ENCODE measurements at regions of chr22 and their contacts with region 1.

Region 1: DNA sequence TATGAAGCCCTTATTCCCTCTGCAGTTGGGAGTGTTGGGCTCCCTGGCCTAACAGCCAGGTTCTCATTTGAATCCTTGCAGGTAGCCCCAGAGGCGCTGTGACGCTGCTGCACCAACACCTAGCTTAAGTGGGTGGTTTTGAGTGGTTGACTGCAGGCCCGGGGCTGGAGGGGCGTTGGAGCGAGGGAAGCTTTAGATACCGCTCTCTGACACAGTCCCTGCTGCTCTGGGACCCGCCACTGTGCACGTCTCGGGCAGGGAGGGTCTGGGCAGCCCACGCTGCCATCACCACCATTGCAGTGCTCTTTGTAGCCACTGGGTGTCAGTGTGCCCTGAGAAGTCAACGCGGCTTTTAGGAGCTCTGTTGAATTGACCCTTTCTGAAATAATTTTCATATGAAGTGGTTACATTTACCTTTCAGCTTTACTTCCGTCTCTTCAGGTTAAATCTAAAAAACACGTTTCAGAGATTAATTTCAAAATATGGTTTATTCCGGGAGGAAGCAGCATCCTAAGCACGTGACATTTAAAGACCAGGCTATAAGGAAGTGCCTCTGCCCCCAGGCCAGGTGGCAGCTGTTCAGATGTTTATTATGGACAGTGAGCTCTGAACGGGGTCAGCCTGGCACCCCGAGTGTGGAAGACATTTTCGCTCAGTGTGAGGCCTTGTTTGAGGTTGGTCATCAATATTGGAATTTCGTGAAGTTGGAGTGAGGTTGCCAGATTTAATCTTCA is 30.9 kb upstream of the PARVB start:
- DNase-seq: peak in 6 of 10 donors; percentile 42 to 91 (median 60)

Region 2: DNA sequence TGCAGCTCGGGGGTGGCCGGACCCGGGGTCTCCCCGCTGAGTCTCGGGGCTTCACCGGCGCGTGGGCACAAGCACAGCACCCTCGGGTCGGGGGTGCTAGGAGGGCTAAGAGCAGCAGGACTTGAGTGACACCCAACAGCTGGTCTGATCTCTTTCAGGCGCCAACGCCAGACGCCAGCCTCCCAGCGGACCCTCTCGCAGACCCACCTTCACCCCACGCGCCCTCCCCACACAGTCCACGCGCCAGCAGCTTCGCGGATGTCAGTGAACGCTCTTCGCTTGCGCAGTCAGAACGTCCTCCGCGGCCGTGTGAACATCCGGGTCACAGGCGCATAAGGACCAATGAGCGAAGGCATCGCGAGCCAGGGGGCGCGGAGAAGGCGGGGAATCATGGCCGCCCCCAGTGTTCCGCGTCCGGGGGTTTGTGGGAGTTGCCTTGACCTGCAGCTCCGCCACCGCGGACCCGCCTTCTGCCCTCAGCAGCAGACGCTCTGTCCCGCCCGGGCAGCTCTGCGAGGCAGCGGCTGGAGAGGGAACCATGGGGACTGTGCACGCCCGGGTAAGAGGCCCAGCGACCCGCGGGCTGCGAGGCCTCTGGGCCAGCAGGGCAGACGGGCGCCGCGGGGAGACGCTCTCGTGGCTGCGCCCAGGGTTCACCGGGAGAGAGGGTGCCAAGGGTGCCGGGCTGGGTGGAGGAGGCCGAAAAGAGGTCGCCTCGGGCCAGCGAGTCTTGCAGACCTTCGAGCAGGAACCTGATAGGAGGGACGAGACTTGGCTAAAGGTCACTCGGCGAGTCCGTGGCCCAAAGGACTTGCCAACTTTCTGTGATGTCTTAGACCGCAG is 37.9 kb before region 1 on chr22 and contains the start of gene SAMM50:
- intact Hi-C with region 1: no loop called
- DNase-seq: peak; percentile 93 to 99 (median 95)

Region 3: GRCh38 chr22:44625981-44626687 is 632.9 kb after region 1 on chr22:
- intact Hi-C with region 1: loop called (anchors 1 kb)
- DNase-seq: peak; percentile 45 to 95 (median 78)

Measured in posterior cingulate gyrus (tissue), 11 donors.